Heart left ventricle (tissue), 16 donors: ENCODE measurements at regions of chr16 and their contacts with region 1.

Region 1: DNA sequence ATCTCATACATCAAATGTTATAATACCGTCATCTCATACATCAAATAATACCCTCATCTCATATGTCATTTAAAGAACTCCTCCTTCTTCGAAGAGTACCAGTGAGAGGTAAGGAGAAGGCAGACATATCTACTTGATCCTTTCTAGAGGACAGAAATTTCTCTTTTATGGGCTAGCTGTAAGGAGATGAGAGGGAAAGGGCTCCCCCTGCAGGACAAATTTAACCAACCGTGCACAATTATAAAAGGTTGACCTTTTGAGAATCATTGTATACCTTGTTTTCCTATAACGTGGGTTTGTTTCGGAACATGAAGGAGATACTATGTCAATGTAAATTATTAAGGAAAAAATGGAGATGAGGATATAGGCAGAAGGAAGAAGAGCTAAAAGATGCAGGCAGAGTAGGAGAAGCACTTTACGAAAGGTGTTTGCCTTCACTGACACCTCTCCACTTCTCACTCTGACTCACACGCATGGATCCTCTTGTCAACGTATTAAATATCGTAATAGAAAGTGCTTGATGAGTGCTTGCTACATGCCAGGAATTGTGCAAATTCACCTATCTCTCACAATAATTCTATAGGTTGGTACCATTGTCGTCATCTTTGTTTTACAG is 465.9 kb upstream of the ERCC4 start:
- DNase-seq: no peak
- ATAC-seq: no peak
- H3K4me3 ChIP-seq: no peak overlapping the region
- H3K27ac ChIP-seq: no peak overlapping the region
- H3K4me1 ChIP-seq: no peaks in the 10 kb centered on the region
- H3K27me3 ChIP-seq: peaks cover 0 to 12% (median 0%) of the 10 kb centered on the region in 9 donors
- CTCF ChIP-seq: peak in 11 of 12 donors; percentile 19 to 53 (median 33)
- POLR2A ChIP-seq: no peak

Region 2: GRCh38 chr16:13120557-13120956 is 333.5 kb before region 1 on chr16:
- intact Hi-C with region 1: no loop called
- DNase-seq: no peak
- ATAC-seq: no peak
- H3K4me3 ChIP-seq: no peak overlapping the region
- H3K27ac ChIP-seq: no peak overlapping the region
- H3K4me1 ChIP-seq: no peaks in the 10 kb centered on the region
- H3K27me3 ChIP-seq: peaks cover 0 to 3% (median 0%) of the 10 kb centered on the region in 9 donors
- CTCF ChIP-seq: no peak
- POLR2A ChIP-seq: no peak

Region 3: DNA sequence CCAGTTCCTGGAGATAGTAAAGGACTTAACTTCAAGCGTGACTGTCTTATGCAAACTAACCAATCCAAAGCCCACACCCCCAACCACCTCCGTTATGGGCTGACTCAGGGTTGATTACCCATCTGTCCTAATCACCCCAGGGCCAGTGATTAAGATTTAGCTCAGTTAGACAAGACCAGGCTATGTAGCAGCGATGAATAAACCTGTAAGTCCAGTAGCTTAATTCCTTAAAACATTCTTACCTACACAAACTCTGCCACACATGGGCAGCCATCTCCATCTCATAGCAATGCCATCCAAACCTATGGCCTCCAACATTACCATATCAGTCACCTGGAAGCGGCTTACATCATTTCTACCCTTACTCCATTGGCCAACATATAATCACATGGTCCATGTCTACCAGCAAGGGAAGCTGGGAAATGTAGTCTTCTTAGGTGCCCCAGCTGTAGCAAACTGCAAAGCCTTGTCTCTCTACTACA is 285.9 kb before region 1 on chr16:
- intact Hi-C with region 1: no loop called
- DNase-seq: no peak
- ATAC-seq: no peak
- H3K4me3 ChIP-seq: no peak overlapping the region
- H3K27ac ChIP-seq: no peak overlapping the region
- H3K4me1 ChIP-seq: no peaks in the 10 kb centered on the region
- H3K27me3 ChIP-seq: no peaks in the 10 kb centered on the region
- CTCF ChIP-seq: no peak
- POLR2A ChIP-seq: no peak

Region 4: DNA sequence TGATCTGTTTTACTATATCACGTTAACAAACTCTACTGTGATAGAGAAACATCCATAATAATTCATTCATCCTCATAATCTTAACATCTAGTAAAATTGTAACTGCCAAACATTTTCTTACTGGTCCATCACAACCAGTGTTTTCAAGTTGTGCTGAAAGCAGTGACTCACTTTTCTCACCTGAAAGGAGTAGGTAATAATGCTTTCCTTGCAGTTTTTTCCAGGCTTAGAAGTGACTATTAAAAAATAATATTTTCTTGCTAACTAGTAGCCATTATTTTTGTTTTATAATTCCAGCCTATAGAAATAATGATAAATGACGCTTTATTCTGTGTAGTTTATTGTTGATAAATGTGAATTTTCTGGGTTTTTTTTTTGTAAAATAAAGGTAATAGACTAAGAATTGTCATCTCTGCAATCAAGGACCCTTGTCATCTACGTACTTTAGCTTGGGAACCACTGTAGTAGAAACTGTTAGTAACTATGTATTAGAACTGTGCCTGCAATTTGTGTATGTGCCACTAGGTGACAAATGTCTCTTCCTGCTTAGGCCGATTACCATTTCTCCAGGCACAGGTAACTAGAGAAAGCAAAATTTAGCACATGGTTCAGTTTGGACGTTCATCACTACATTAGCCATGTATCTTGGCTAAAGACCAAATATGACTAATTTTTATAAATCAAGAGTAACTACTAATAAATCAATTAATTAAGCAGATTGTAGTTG is 56.5 kb after region 1 on chr16:
- intact Hi-C with region 1: loop called in 1 of 10 experiments (anchors 10 kb)
- DNase-seq: no peak
- ATAC-seq: no peak
- H3K4me3 ChIP-seq: no peak overlapping the region
- H3K27ac ChIP-seq: no peak overlapping the region
- H3K4me1 ChIP-seq: no peaks in the 10 kb centered on the region
- H3K27me3 ChIP-seq: peaks cover 0 to 4% (median 0%) of the 10 kb centered on the region in 9 donors
- CTCF ChIP-seq: peak in 2 of 12 donors; percentile 19 to 21
- POLR2A ChIP-seq: no peak

Region 5: DNA sequence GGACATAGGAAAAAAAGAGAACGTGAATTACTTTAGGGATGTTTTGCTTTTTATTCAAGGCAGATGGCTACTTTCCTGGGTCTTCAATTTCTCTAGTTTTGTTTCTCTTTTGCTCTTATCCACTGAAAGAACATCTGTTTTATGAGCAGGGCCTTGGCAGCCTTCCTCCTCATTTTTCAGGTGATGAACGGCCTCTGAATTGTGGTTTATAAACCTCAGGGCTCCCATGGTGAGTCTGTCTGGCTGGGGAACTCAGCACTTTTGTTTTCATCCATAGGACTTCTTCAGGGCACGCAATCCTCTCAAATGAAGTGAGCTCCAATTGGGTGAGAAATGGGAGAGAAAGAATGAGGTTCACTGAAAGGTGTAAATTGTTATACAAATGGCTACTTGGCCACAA is 279.5 kb after region 1 on chr16:
- intact Hi-C with region 1: no loop called
- DNase-seq: no peak
- ATAC-seq: no peak
- H3K4me3 ChIP-seq: no peak overlapping the region
- H3K27ac ChIP-seq: no peak overlapping the region
- H3K4me1 ChIP-seq: peaks cover 0 to 4% (median 0%) of the 10 kb centered on the region in 12 donors
- H3K27me3 ChIP-seq: peaks cover 0 to 6% (median 0%) of the 10 kb centered on the region in 9 donors
- CTCF ChIP-seq: no peak
- POLR2A ChIP-seq: no peak